A549 (cell line): ENCODE measurements at regions of chr16 and their contacts with region 1.

Region 1: GRCh38 chr16:31117391-31118197 is at the start of gene KAT8:
- DNase-seq: peak; percentile 96 to 98
- ATAC-seq: peak; percentile 96 to 97
- H3K4me3 ChIP-seq: peak within 1 kb of the TSS; percentile 57
- H3K27ac ChIP-seq: peak within 1 kb of the TSS; percentile 91 to 93
- H3K4me1 ChIP-seq: peaks cover 17% of the 10 kb centered on the region
- CTCF ChIP-seq: no peak
- EP300 ChIP-seq: no peak
- POLR2A ChIP-seq: peak; percentile 65
- RAD21 ChIP-seq: 0 out of 5 replicates have a peak, but pooled peaks of 1 of the 2 experiments have one; percentile 20
- polyA plus RNA-seq, gene KAT8: 42.2 and 52.9 TPM in 2 replicates

Region 2: GRCh38 chr16:31128711-31129567 is 11.3 kb after region 1 on chr16:
- CTCF ChIA-PET with region 1: interaction called, 8 read pairs
- POLR2A ChIA-PET with region 1: interaction called, 31 read pairs
- DNase-seq: no peak
- ATAC-seq: no peak
- H3K4me3 ChIP-seq: no peak overlapping the region
- H3K27ac ChIP-seq: no peak overlapping the region
- H3K4me1 ChIP-seq: peaks cover 2% of the 10 kb centered on the region; the same call in 1 of the 3 replicates
- CTCF ChIP-seq: no peak
- EP300 ChIP-seq: no peak
- POLR2A ChIP-seq: no peak
- RAD21 ChIP-seq: no peak

Region 3: DNA sequence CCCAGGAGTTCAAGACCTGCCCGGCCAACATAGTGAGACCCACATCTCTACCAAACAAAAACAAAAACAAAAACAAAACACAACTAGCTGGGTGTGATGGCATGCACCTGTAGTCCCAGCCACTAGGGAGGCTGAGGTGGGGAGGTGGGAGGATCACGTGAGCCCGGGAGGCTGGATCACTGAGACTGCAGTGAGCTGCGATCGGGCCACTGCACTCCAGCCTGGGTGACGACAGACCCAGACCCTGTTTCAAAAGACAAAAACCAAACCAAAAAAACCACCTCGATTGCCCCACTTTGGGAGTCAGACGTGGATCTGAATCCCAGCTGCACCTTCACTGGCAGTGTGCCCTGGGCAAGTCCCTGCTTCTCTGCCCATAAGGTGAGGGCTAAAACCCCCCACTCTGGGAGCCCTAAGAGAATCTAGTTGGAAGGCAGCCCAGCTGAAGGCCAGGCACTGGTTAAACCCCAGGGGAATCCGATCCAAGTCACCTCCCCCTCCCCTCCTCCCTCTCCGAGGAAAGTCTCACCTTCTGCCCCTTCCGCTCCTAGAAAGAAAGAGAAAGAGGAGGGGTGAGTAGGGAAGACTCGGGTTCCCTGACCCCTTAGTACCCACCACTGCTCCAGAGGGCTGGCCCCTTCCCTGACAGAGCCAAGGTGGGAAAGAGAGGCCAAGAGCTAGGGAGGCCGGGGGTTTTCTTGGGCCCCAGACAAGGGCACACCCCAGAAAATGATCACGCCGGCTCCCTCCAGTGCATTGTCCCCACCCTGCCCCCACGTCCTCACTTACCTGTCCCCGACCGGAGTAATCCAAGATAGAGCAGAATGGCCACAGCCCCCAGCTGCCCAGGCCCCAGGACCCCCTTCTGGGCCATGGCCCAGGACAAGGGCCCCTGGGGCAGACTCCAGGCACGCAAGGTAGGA is 17.3 kb after region 1 on chr16:
- CTCF ChIA-PET with region 1: interaction called, 166 read pairs
- POLR2A ChIA-PET with region 1: interaction called, 31 read pairs
- DNase-seq: no peak
- ATAC-seq: no peak
- H3K4me3 ChIP-seq: no peak overlapping the region
- H3K27ac ChIP-seq: no peak overlapping the region
- H3K4me1 ChIP-seq: peaks cover 31% of the 10 kb centered on the region
- CTCF ChIP-seq: no peak
- EP300 ChIP-seq: no peak
- POLR2A ChIP-seq: no peak
- RAD21 ChIP-seq: no peak

Region 4: GRCh38 chr16:31301708-31302400 is 184.3 kb after region 1 on chr16:
- CTCF ChIA-PET with region 1: no interaction called
- POLR2A ChIA-PET with region 1: no interaction called
- DNase-seq: peak; percentile 8 to 30
- ATAC-seq: peak; percentile 64 to 77
- H3K4me3 ChIP-seq: no peak overlapping the region
- H3K27ac ChIP-seq: no peak overlapping the region
- H3K4me1 ChIP-seq: no peaks in the 10 kb centered on the region
- CTCF ChIP-seq: no peak
- EP300 ChIP-seq: no peak
- POLR2A ChIP-seq: no peak
- RAD21 ChIP-seq: no peak